HEK293 (cell line): ENCODE measurements at regions of chr10 and their contacts with region 1.

Region 1: DNA sequence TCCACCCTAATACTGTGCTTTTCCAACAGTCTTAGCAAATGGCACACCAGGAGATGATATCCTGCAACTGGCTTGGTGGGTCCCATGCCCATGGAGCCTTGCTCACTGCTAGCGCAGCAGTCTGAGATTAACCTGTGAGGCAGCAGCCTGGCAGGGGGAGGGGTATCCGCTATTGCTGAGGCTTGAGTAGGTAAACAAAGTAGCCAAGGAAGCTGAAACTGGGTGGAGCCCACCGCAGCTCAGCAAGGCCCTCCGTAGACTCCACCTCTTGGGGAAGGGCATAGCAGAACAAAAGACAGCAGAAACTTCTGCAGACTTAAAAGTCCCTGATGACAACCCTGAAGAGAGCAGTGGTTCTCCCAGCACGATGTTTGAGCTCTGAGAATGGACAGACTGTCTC is 399.0 kb downstream of the CCSER2 start:
- H3K4me3 ChIP-seq: no peak overlapping the region
- H3K27ac ChIP-seq: no peak overlapping the region
- H3K4me1 ChIP-seq: no peaks in the 10 kb centered on the region
- CTCF ChIP-seq: no peak

Region 2: DNA sequence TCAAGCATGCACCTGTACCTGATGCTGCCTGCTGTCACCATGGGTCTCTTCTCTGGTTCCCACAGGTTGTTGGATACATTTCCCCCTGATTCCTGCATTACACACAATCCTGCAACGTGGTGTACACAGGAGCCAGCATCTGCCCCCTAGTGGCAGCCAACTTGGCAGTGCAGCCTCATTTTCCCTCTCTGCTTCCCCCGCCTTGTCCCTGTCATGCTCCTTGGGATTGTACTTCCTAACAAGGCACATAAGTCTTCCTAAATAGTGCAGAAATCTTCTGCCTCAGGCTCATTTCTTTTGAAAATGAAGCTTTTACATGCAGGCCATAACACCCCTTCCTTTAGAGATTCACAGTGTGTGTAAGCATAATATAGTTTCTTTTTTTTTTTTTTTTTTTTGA is 11.5 kb before region 1 on chr10:
- CTCF ChIA-PET with region 1: interaction called, 10 read pairs
- POLR2A ChIA-PET with region 1: no interaction called
- H3K4me3 ChIP-seq: no peak overlapping the region
- H3K27ac ChIP-seq: no peak overlapping the region
- H3K4me1 ChIP-seq: no peaks in the 10 kb centered on the region
- CTCF ChIP-seq: peak; percentile 34; the same call in 1 of the 2 replicates